CD14-positive monocyte (primary cell): ENCODE measurements at regions of chr22 and their contacts with region 1.

Region 1: GRCh38 chr22:19325296-19325948 is 33.9 kb upstream of the CLTCL1 start:
- DNase-seq: peak; percentile 10 to 14 (median 11)
- H3K4me3 ChIP-seq: no peak overlapping the region
- H3K4me3 Mint-ChIP-seq: no peak overlapping the region
- H3K27ac ChIP-seq: no peak overlapping the region
- H3K27ac Mint-ChIP-seq: peak overlapping the region in 3 of 7 donors; percentile 2 to 78 (median 58)
- H3K4me1 ChIP-seq: peaks cover 4 to 27% of the 10 kb centered on the region in 2 donors
- H3K4me1 Mint-ChIP-seq: peaks cover 25% of the 10 kb centered on the region
- H3K27me3 ChIP-seq: no peaks in the 10 kb centered on the region
- H3K27me3 Mint-ChIP-seq: peaks cover 0 to 2% (median 1%) of the 10 kb centered on the region in 3 donors
- CTCF ChIP-seq: no peak

Region 2: DNA sequence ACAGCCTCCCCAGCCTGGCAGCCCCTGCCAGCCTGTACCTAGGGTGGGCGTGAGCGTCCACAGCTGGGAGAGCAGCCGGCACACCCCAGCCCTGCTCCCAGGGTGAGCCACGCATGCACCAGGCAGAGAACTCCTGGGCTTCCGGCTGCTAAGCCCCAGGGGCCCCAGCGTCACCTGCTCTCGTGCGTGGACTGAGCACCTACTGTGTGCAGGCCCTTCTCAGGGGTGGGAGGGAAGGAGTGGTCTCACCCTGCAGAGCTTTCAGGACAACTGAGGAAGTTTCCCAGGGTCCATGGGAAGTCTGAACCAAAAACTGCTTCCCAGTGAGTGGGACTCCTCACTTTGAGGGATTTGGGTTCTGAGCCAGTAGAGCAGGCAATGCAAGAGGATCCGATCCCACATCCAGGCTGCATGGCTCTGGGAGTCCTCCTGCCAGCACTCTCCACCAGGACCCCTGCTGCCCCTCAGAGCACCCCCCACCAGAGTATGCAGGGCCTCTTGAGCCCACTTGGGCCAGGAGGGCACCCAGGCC is 342.2 kb before region 1 on chr22:
- intact Hi-C with region 1: no loop called
- DNase-seq: no peak
- H3K4me3 ChIP-seq: no peak overlapping the region
- H3K4me3 Mint-ChIP-seq: no peak overlapping the region
- H3K27ac ChIP-seq: no peak overlapping the region
- H3K27ac Mint-ChIP-seq: no peak overlapping the region
- H3K4me1 ChIP-seq: no peaks in the 10 kb centered on the region
- H3K4me1 Mint-ChIP-seq: no peaks in the 10 kb centered on the region
- H3K27me3 ChIP-seq: no peaks in the 10 kb centered on the region
- H3K27me3 Mint-ChIP-seq: peaks cover 3 to 6% (median 5%) of the 10 kb centered on the region in 3 donors
- CTCF ChIP-seq: no peak

Region 3: DNA sequence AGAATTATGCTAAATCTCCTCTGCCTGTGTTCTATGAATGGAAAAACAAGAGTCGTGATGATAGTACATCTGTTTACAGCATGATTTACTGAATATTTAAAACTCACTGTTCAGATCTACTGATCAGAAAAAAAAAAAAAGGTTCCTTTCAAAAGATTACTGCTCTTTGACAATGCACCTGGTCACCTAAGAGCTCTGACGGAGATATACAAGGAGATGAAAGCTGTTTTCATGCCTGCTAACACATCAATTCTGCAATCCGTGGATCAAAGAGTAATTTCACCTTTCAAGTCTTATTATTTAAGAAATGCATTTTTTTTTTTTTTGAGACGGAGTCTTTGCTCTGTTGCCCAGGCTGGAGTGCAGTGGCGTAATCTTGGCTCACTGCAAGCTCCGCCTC is 64.6 kb before region 1 on chr22:
- intact Hi-C with region 1: loop called in 1 of 2 experiments (anchors 10 kb)
- DNase-seq: no peak
- H3K4me3 ChIP-seq: no peak overlapping the region
- H3K4me3 Mint-ChIP-seq: no peak overlapping the region
- H3K27ac ChIP-seq: no peak overlapping the region
- H3K27ac Mint-ChIP-seq: no peak overlapping the region
- H3K4me1 ChIP-seq: no peaks in the 10 kb centered on the region
- H3K4me1 Mint-ChIP-seq: peaks cover 7% of the 10 kb centered on the region
- H3K27me3 ChIP-seq: no peaks in the 10 kb centered on the region
- H3K27me3 Mint-ChIP-seq: peaks cover 0 to 2% (median under 1%) of the 10 kb centered on the region in 3 donors
- CTCF ChIP-seq: no peak